ENCODE measurements at regions of chr12 and their contacts with region 1.

Region 1: DNA sequence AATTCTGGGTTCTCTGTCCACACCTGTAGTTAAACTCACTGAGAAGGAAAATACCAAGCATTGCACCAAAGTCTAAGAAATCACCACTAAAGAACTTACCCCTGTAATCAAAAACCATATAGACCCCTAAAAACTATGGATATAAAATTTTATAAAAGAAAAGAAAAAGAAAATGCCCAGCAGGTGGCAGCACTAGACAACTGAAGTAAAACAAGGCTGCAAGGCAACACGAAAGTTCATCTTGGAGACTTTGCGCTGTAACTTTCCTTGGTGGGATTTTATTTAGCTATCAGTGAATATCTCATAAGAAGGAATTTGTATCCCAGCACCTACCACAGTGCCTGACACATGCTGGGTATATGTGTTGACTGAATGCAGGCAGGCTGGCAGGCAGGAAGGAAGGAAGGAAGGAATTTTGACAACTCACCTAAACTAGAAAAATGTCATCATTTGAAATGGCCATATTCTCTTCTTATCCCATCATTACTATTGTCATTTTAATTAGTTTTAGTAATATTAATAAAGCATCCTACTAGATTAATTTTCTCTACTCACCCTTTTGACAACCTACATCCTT is 68.2 kb upstream of the ETV6 start:
- DNase-seq: peak in 1 of 2 experiments; percentile 66
- H3K4me3 ChIP-seq: no peak overlapping the region
- H3K27ac ChIP-seq: no peak overlapping the region
- H3K4me1 ChIP-seq: peaks cover 0 to 6% (median 4%) of the 10 kb centered on the region in 4 experiments; a peak in 3 of 7 replicates
- H3K27me3 ChIP-seq: no peaks in the 10 kb centered on the region
- CTCF ChIP-seq: peak in 2 of 3 experiments; percentile 38 to 54; a peak in 2 of 4 replicates
- EP300 ChIP-seq: no peak
- POLR2A ChIP-seq: no peak
- RAD21 ChIP-seq: peak; percentile 89 to 93

Region 2: GRCh38 chr12:11568762-11569478 is 12.3 kb before region 1 on chr12:
- CTCF ChIA-PET with region 1: interaction called, 20 read pairs
- POLR2A ChIA-PET with region 1: interaction called, 3 read pairs
- DNase-seq: no peak
- H3K4me3 ChIP-seq: no peak overlapping the region
- H3K27ac ChIP-seq: no peak overlapping the region
- H3K4me1 ChIP-seq: no peaks in the 10 kb centered on the region
- H3K27me3 ChIP-seq: no peaks in the 10 kb centered on the region
- CTCF ChIP-seq: no peak
- EP300 ChIP-seq: no peak
- POLR2A ChIP-seq: no peak
- RAD21 ChIP-seq: no peak

Region 3: DNA sequence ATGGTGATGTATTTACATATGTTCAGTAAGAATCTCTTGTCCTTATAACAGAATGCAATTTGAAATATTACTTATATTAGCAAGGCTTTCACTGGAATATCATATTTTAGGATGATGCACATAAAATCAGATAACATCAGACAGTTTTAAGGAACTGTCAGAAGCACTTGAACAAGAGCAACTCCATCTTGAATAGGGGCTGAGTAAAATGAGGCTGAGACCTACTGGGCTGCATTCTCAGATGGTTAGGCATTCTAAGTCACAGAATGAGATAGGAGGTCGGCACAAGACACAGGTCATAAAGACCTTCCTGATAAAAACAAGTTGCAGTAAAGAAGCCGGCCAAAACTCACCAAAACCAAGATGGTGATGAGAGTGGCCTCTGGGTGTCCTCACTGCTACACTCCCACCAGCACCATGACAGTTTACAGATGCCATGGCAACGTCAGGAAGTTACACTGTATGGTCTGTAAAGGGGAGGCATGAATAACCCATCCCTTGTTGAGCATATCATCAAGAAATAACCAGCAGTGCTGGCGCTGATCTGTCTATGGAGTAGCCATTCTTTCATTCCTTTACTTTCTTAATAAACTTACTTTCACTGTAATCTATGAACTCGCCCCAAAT is 40.6 kb after region 1 on chr12:
- CTCF ChIA-PET with region 1: interaction called, 39 read pairs
- POLR2A ChIA-PET with region 1: interaction called, 4 read pairs
- DNase-seq: no peak
- H3K4me3 ChIP-seq: no peak overlapping the region
- H3K27ac ChIP-seq: no peak overlapping the region
- H3K4me1 ChIP-seq: peaks cover 0 to 17% (median 10%) of the 10 kb centered on the region in 4 experiments; a peak in 5 of 7 replicates
- H3K27me3 ChIP-seq: no peaks in the 10 kb centered on the region
- CTCF ChIP-seq: no peak
- EP300 ChIP-seq: no peak
- POLR2A ChIP-seq: no peak
- RAD21 ChIP-seq: peak; percentile 44 to 49

Region 4: GRCh38 chr12:11729008-11729407 is 147.7 kb after region 1 on chr12:
- CTCF ChIA-PET with region 1: interaction called, 25 read pairs
- POLR2A ChIA-PET with region 1: no interaction called
- DNase-seq: no peak
- H3K4me3 ChIP-seq: no peak overlapping the region
- H3K27ac ChIP-seq: no peak overlapping the region
- H3K4me1 ChIP-seq: peaks cover 0 to 3% (median 0%) of the 10 kb centered on the region in 4 experiments; a peak in 3 of 7 replicates
- H3K27me3 ChIP-seq: no peaks in the 10 kb centered on the region
- CTCF ChIP-seq: no peak
- EP300 ChIP-seq: no peak
- POLR2A ChIP-seq: no peak
- RAD21 ChIP-seq: no peak

Region 5: DNA sequence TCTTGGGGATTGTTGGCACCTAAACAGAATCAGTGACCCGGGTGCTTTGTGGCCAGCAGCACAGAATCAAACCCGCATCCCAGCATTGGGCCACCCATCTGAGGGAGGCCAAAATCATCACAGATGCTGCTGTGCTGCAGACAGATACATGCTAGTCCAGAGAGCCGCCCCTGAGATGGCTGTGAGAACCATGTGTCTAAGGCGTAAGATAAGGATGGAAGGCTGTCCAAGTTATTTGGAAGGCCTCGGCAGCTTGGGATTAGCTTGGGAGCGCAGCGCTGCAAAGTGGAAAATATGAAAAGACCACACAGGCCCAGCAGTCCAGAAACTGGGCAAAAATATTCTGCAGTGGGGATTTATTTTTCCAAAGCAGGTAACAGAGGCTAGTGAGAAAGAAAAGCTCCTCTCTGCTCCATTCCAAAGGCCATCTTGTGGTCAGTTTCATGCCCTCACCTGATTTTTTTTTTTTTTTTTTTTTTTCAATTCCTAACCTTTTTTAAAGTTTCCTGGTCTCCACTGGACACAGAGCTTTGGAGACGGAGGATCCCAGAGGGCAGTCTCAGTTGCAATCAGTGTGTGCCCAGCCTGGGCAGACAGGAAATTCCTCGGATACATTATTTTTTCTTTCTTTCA is 310.6 kb after region 1 on chr12:
- CTCF ChIA-PET with region 1: interaction called, 11 read pairs
- POLR2A ChIA-PET with region 1: no interaction called
- DNase-seq: no peak
- H3K4me3 ChIP-seq: no peak overlapping the region
- H3K27ac ChIP-seq: no peak overlapping the region
- H3K4me1 ChIP-seq: no peaks in the 10 kb centered on the region; a peak in 1 of 7 replicates
- H3K27me3 ChIP-seq: no peaks in the 10 kb centered on the region
- CTCF ChIP-seq: peak in 2 of 3 experiments; percentile 29 to 30; a peak in 2 of 4 replicates
- EP300 ChIP-seq: no peak
- POLR2A ChIP-seq: no peak
- RAD21 ChIP-seq: peak; percentile 48 to 58; a peak in 3 of 4 replicates

Region 6: GRCh38 chr12:12008931-12009611 is 427.8 kb after region 1 on chr12:
- CTCF ChIA-PET with region 1: interaction called, 39 read pairs
- POLR2A ChIA-PET with region 1: interaction called, 3 read pairs
- DNase-seq: peak; percentile 64 to 78
- H3K4me3 ChIP-seq: peak overlapping the region in 2 of 4 experiments; percentile 5 to 7; a peak in 2 of 8 replicates
- H3K27ac ChIP-seq: peak overlapping the region; percentile 44; the same call in 1 of the 2 replicates
- H3K4me1 ChIP-seq: peaks cover 14 to 22% (median 19%) of the 10 kb centered on the region in 4 experiments
- H3K27me3 ChIP-seq: no peaks in the 10 kb centered on the region
- CTCF ChIP-seq: peak; percentile 36 to 58 (median 56)
- EP300 ChIP-seq: peak in 1 of 2 experiments; percentile 66; a peak in 1 of 3 replicates
- POLR2A ChIP-seq: no peak
- RAD21 ChIP-seq: peak; percentile 42 to 57; a peak in 3 of 4 replicates

Region 7: GRCh38 chr12:12032851-12033588 is 451.8 kb after region 1 on chr12:
- CTCF ChIA-PET with region 1: interaction called, 43 read pairs
- POLR2A ChIA-PET with region 1: interaction called, 3 read pairs
- DNase-seq: peak in 1 of 2 experiments; percentile 83
- H3K4me3 ChIP-seq: peak overlapping the region; percentile 2 to 53 (median 30); a peak in 5 of 8 replicates
- H3K27ac ChIP-seq: no peak overlapping the region
- H3K4me1 ChIP-seq: peaks cover 0 to 3% (median 1%) of the 10 kb centered on the region in 4 experiments; a peak in 2 of 7 replicates
- H3K27me3 ChIP-seq: no peaks in the 10 kb centered on the region; a peak in 2 of 7 replicates
- CTCF ChIP-seq: peak; percentile 49 to 86 (median 80)
- EP300 ChIP-seq: no peak
- POLR2A ChIP-seq: no peak
- RAD21 ChIP-seq: peak; percentile 95 to 97